IMR-90 (cell line): ENCODE measurements at regions of chr16 and their contacts with region 1.

Region 1: GRCh38 chr16:7055443-7055842 is 277.2 kb upstream of the RBFOX1 start:
- DNase-seq: no peak
- ATAC-seq: no peak
- H3K4me3 ChIP-seq: no peak overlapping the region
- H3K27ac ChIP-seq: no peak overlapping the region
- H3K4me1 ChIP-seq: no peaks in the 10 kb centered on the region
- H3K27me3 ChIP-seq: no peaks in the 10 kb centered on the region
- CTCF ChIP-seq: no peak
- POLR2A ChIP-seq: no peak
- RAD21 ChIP-seq: no peak

Region 2: GRCh38 chr16:6993559-6993958 is 61.9 kb before region 1 on chr16:
- CTCF ChIA-PET with region 1: no interaction called
- POLR2A ChIA-PET with region 1: no interaction called
- dilution Hi-C with region 1: no loop called
- in situ Hi-C with region 1: loop called (anchors 10 kb)
- intact Hi-C with region 1: no loop called
- DNase-seq: no peak
- ATAC-seq: no peak
- H3K4me3 ChIP-seq: no peak overlapping the region
- H3K27ac ChIP-seq: no peak overlapping the region
- H3K4me1 ChIP-seq: no peaks in the 10 kb centered on the region
- H3K27me3 ChIP-seq: no peaks in the 10 kb centered on the region
- CTCF ChIP-seq: no peak
- POLR2A ChIP-seq: no peak
- RAD21 ChIP-seq: no peak